Right ventricle myocardium inferior (tissue), 1 donor: ENCODE measurements at regions of chr5 and their contacts with region 1.

Region 1: DNA sequence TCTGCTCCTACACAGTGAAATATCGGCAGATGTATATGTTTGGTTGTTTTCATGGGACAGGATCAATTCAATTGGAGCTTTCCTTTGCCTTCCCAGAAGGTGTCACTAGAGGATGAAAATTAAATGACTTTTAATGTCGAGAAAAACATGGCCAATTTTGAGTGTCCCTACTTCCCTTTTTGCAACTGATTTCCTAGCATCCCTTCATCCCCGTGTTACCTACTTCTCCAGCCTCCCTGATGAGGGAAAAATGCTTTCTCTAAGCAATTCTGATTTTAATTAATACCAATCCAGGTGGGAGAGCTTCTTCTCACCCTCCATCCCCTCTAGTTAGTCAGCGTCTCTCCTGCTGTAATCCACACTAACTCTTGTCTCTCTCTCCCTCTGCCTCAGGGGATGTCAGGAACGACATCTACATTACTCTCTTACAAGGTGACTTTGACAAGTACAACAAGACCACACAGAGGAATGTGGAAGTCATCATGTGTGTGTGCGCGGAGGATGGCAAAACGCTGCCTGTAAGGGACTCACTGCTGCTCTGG is 64.9 kb downstream of the DOCK2 start:
- DNase-seq: no peak
- ATAC-seq: peak; percentile 54

Region 2: GRCh38 chr5:169583424-169584204 is 118.4 kb before region 1 on chr5 and contains the start of gene SPDL1:
- intact Hi-C with region 1: no loop called
- DNase-seq: peak; percentile 96
- ATAC-seq: peak; percentile 97
- total RNA-seq, gene SPDL1: 4.6 TPM

Region 3: GRCh38 chr5:170070556-170071412 is 368.8 kb after region 1 on chr5:
- intact Hi-C with region 1: loop called (anchors 2 kb)
- DNase-seq: no peak
- ATAC-seq: peak; percentile 48

Region 4: DNA sequence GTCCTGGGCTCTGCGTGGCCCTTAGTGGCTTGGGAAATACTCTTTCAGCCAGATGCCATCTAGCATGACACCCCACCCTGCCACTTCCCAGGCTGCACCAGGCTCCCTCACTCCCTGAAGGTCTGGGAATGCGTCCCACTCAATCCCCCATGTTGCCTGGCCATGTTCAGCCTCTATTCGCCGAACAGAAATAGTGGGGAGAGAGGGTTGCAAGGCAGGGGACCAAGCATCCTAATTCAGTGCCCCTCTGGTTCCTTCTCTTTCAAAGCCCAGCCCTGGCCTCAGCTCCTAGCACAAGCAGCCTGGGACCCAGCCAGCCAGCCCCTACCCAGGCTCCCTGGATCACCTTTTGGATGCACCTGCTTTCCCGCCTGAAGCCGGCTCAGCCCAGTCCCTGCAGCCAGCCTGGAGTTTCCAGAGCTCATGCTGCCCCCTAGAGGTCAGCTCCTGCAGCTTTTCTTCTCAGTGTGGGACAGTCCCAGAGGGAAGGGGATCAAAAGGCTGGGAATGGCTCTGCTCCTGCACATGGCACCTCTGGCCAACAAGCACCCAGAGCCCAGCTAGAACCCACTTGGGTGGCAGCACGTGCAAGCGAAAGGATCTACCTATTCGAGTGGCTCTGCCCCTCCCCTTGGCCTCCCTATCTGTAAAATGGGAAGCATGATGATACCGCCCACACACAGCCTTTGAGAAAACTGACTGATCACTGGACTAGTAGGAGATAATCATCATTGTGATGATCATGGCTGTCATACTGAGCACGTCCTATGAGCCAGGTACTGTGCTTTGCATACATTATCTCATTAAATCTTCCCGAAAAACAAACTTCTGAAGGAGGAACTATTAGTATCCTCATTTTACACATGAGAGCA is 482.1 kb after region 1 on chr5:
- intact Hi-C with region 1: loop called (anchors 10 kb)
- DNase-seq: no peak
- ATAC-seq: peak; percentile 82